A549 (cell line): ENCODE measurements at regions of chr1 and their contacts with region 1.

Region 1: GRCh38 chr1:181088079-181089016 is at the start of gene IER5:
- DNase-seq: peak; percentile 86 to 98
- ATAC-seq: peak; percentile 80 to 89
- H3K4me3 ChIP-seq: peak within 1 kb of the TSS; percentile 91
- H3K27ac ChIP-seq: peak within 1 kb of the TSS; percentile 80 to 97
- H3K4me1 ChIP-seq: peaks cover 56% of the 10 kb centered on the region
- CTCF ChIP-seq: no peak
- EP300 ChIP-seq: no peak; a peak in 1 of 5 replicates
- POLR2A ChIP-seq: peak; percentile 100
- RAD21 ChIP-seq: peak; percentile 40
- polyA plus RNA-seq, gene IER5: 21.2 and 26.8 TPM in 2 replicates

Region 2: DNA sequence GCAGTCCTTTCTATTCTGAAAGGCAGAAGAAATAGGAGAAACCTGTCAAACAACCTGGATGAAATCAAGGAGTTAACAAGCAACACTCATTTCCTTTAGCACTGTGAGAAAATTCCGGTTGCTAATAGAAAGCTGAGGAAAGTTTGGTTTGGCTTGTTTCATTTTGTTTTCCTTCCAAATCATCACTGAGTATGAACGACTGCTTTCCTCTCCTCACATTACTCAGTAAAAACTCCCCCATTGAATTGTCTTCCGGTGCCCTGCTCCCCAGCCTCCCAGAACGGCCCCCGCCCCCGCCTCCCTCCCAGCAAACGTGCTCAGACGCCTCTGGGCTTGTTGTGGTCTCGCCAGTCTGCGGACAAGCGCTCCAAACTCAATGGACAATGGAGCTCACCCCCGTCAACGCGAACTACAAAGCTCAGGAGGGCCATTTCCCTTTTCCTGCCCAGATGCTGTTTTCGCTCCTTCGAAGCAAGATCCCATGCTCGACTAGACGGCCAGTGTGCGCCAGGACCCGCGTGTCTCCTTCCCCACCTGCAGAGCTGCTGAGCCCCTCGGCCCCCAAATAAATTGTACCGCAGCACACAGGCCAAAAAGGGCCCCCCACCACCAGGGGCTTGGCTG is 66.4 kb before region 1 on chr1:
- CTCF ChIA-PET with region 1: interaction called, 3 read pairs
- POLR2A ChIA-PET with region 1: interaction called, 10 read pairs
- DNase-seq: peak; percentile 39 to 63
- ATAC-seq: peak; percentile 48 to 59
- H3K4me3 ChIP-seq: peak overlapping the region; percentile 76
- H3K27ac ChIP-seq: peak overlapping the region; percentile 88 to 98
- H3K4me1 ChIP-seq: peaks cover 11% of the 10 kb centered on the region; the same call in 2 of the 3 replicates
- CTCF ChIP-seq: no peak
- EP300 ChIP-seq: no peak
- POLR2A ChIP-seq: no peak
- RAD21 ChIP-seq: no peak

Region 3: GRCh38 chr1:181099152-181100014 is 11.0 kb after region 1 on chr1:
- CTCF ChIA-PET with region 1: interaction called, 49 read pairs
- POLR2A ChIA-PET with region 1: interaction called, 20 read pairs
- DNase-seq: no peak
- ATAC-seq: no peak
- H3K4me3 ChIP-seq: no peak overlapping the region
- H3K27ac ChIP-seq: peak overlapping the region; percentile 66 to 98
- H3K4me1 ChIP-seq: peaks cover 86% of the 10 kb centered on the region
- CTCF ChIP-seq: no peak
- EP300 ChIP-seq: no peak
- POLR2A ChIP-seq: no peak
- RAD21 ChIP-seq: no peak

Region 4: DNA sequence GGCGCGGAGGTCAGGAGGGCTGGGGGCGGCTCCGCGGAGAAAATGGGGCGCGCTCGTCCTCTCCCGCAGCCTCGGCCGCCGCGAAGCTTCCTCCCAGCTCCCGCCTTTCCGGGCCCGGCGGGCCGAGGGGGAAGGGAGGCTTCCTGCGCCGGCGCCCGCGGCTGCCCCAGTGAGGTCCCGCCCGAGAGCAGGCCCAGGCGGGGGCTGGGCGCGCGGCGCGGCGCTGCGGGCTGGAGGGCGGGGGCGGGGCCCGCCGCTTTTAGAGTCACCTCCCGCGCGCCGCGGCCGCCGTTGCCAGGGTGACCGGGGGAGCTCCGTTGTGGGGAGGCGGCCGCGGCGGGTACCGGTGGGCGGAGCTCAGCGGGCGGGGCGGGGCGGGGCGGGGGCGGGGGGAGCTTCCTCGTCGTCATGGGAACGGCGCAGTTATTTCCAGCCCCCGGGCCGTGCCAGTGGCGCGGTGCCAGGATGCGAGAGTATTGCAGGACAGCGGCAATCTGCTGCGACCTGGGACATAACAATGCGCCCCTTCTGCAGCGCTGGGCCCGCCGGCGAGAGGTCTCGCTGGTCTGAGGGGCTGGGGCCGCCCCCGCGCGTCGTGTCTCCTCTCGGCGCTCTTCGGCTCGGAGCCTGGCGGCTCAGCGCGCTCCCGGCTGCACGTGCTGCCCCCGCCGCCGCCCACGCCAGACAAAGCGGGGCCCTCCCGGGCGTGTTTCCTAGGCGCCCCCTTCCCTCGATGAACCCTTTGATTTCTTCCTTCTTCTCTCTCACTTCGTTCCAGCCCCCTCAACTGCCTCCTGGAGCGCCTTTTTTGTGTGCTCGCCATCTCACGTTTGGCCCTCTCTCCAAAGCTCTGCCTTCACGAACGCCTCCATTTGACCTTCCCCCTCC is 17.0 kb after region 1 on chr1:
- CTCF ChIA-PET with region 1: interaction called, 49 read pairs
- POLR2A ChIA-PET with region 1: interaction called, 20 read pairs
- DNase-seq: peak; percentile 84 to 90
- ATAC-seq: peak; percentile 75 to 81
- H3K4me3 ChIP-seq: peak overlapping the region; percentile 65
- H3K27ac ChIP-seq: peak overlapping the region; percentile 98 to 99
- H3K4me1 ChIP-seq: peaks cover 89% of the 10 kb centered on the region
- CTCF ChIP-seq: no peak
- EP300 ChIP-seq: peak in 1 of 2 experiments; percentile 28; a peak in 1 of 5 replicates
- POLR2A ChIP-seq: peak; percentile 47; the same call in 1 of the 2 replicates
- RAD21 ChIP-seq: no peak; a peak in 1 of 5 replicates

Region 5: DNA sequence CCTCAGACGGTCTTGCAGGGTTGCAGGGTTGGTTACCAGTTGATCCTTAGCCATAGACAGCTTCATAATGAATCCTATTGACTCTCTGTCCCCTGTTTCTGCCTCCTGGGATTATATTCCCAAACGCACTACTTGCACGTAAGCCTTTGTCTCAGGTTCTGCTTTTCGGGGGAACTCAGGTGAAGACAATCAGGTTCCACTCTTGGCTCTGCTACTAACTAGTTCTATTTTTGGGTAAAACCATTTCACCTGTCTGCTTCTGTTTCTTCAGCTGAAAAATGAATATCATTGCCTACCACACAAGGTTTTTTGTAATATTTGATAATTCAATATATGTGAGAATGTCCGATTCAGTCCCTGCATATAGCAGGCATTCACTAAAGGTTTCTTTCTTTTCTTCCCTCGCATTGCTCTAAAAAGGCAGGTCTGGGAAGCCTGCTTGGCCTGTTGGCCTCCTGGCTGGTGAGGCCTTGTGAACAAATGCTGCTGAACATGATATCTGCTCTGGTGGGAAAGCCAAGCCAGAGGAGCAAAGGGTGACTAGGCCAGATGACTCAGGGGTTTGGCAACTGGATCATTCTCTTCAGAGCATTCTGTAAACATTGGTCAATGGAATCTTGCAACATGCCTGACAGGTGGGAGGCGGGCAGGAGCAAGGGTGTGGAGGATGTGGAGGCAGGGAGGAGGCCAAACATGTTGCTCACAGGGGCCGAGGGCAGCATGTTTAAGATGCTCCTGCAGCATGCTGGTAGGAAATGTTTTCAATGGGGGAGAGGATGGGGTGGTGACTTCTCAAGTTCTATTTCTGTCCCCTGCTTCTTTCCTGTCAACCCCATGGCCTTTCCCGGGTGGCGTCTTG is 24.0 kb after region 1 on chr1:
- CTCF ChIA-PET with region 1: interaction called, 5 read pairs
- POLR2A ChIA-PET with region 1: interaction called, 12 read pairs
- DNase-seq: peak; percentile 97 to 99
- ATAC-seq: peak; percentile 85 to 91
- H3K4me3 ChIP-seq: peak overlapping the region; percentile 14; the same call in 1 of the 3 replicates
- H3K27ac ChIP-seq: peak overlapping the region; percentile 93 to 98
- H3K4me1 ChIP-seq: peaks cover 95% of the 10 kb centered on the region
- CTCF ChIP-seq: no peak
- EP300 ChIP-seq: peak; percentile 93; a peak in 4 of 5 replicates
- POLR2A ChIP-seq: no peak; the same call in 1 of the 2 replicates
- RAD21 ChIP-seq: peak; percentile 29 to 61

Region 6: DNA sequence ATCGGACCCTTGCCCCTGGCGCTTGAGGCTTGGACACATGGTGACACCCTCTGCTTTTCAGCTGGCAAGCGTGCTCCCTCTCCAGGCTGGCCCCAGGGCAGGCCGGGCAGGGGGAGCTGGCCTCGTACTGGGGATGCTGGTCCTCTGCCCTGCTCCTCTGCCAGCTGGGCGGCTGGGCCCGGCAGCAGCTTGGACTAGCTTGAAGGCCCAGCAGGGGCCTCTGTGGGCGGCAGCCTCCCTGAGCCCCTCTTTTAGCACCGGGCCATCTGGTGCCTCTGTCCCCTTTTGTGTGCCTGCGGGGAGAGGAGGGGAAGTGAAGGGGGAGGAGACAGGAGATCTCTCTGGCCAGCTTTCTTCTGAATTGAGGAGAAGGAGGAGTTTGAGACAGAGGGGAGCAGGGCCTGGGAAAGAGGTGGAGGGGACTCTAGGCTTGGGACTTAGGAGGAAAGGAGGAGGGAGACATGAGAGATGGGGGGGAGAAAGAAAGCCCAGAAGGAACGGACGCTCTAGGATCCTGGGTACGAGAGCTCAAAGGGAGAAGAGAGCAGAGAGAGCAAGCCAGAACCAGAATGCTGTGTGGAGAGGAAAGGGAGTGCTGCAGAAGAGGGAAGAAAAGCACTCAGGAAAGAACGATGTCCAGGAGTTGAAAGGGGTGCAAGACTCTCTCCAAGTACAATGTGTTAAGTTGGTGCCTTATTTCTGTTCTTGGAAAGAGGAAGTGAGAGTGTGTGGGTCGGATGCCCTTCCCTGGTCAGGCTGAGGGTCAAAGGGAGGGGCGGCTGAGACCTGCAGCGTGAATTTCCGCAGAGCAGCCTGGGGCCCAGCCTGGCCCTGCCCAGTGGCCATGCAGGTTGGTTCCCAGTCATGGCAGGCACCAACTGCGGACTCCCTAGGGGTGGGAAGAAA is 40.5 kb after region 1 on chr1:
- CTCF ChIA-PET with region 1: interaction called, 774 read pairs
- POLR2A ChIA-PET with region 1: interaction called, 10 read pairs
- DNase-seq: no peak
- ATAC-seq: peak in 1 of 2 experiments; percentile 7; a peak in 2 of 6 replicates
- H3K4me3 ChIP-seq: no peak overlapping the region
- H3K27ac ChIP-seq: peak overlapping the region; percentile 73 to 90
- H3K4me1 ChIP-seq: peaks cover 76% of the 10 kb centered on the region
- CTCF ChIP-seq: no peak
- EP300 ChIP-seq: no peak
- POLR2A ChIP-seq: no peak
- RAD21 ChIP-seq: no peak

Region 7: DNA sequence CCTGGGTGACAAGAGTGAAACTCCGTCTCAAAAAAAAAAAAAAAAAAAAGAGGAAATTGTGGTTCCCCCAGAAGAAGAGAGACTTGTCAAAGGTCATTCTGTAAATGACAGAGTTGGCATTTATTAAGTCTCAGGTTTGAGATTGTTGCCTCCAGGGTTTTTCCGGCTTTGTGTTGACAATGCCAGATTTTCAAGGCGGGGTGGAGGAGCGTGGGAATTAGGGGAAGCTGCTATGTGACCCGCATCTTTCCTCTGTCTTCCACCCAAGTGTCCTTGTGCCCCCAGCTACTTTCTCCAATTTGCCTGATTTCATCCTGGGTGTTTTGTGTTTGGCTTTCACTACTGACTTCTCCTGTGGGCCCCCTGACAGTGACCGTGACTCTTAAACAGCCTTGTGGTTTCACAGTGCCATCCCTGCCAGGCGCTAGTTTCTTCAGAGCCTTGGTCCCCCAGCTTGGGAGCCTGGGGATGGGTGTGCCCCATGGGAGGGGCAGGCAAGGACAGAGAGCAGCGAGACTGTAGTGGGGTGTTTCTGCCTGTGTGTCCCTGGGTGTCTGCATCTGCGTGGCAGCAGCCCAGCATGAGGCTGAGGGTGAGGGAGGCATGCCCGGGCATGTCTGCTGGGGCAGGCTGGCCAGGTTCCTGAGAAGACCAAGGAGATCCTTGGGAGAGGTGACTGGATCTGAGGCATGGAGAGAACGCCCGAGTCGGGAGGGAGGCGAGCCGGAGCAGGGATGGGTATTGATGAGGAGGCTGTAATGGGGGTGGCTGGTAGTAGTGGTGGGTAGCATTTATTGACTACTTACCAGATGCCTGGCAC is 46.4 kb after region 1 on chr1:
- CTCF ChIA-PET with region 1: interaction called, 774 read pairs
- POLR2A ChIA-PET with region 1: interaction called, 21 read pairs
- DNase-seq: peak in 1 of 2 experiments; percentile 77
- ATAC-seq: peak; percentile 54 to 62
- H3K4me3 ChIP-seq: no peak overlapping the region
- H3K27ac ChIP-seq: peak overlapping the region; percentile 92 to 98
- H3K4me1 ChIP-seq: peaks cover 62% of the 10 kb centered on the region
- CTCF ChIP-seq: no peak
- EP300 ChIP-seq: no peak
- POLR2A ChIP-seq: no peak
- RAD21 ChIP-seq: no peak

Region 8: DNA sequence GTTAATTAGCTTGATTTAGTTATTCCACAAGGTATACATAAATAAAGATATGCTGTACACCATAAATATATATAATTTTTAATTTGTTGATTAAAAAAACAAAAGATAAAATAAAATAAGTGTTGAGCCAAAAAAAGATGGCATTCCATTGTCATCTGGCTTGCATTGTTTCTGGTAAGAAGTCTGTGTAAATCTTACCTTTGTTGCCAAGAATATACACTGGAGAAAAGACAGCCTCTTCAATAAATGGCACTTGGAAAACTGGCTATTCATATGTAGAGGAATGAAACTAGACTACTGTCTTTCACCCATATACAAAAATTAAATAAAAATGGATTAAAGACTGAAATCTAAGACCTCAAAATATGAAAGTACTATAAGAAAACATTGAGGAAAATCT is 196.6 kb after region 1 on chr1:
- CTCF ChIA-PET with region 1: no interaction called
- POLR2A ChIA-PET with region 1: no interaction called
- DNase-seq: no peak
- ATAC-seq: no peak
- H3K4me3 ChIP-seq: no peak overlapping the region
- H3K27ac ChIP-seq: no peak overlapping the region
- H3K4me1 ChIP-seq: no peaks in the 10 kb centered on the region
- CTCF ChIP-seq: no peak
- EP300 ChIP-seq: no peak
- POLR2A ChIP-seq: no peak
- RAD21 ChIP-seq: no peak